ENCODE measurements at regions of chr10 and their contacts with region 1.

Region 1: DNA sequence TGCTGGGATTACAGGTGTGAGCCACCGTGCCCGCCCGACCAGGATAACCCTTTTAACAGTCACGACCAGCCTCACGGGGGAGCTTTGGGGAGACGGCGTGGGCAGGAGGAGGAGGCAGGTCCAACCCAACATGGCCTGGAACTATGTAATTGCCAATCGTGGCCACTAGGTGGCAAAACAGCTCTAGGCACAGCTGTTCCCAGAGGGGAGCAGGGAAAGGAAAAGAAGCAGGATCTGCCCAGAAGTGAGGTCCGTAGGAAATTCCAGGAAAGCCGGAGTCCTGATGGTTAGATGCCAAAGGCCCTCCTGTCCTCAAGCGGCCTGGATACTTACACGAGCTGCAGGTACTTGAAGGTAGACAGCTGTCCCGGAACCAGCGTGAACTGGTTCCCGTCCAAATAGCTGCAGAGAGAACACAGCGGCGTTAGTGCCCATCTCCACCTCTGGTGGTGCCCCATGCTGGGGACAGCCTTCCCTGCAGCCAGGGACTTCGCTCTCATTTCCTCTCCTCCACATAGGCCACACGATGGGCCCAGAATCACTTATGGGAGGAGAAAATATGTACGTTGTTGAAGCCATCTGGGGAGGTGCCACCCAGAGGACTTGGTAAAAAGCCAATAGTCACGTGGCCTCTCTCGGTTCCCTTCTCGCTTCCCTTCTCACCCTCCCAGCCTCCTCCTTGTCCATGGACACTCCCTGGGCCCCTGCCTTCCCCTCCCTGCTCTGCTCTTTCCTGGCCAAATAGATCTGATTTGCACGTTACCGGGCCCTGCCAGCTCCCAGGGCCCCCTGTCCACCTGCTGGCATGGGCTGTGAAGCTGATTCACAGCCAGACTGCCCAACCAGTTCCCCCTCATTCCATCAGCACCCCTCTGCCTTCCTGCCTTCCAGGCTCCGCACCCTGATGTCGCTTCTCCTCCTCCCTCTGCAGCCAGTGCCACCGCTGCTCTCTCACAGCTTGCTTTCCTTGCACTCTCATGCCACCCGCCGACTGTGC is 148.1 kb downstream of the SLIT1 start:
- DNase-seq: peak; percentile 89
- H3K4me3 ChIP-seq: peak overlapping the region in 1 of 2 experiments; percentile 20; a peak in 1 of 4 replicates
- H3K27ac ChIP-seq: no peak overlapping the region
- H3K4me1 ChIP-seq: peaks cover 0 to 4% of the 10 kb centered on the region in 2 experiments; a peak in 1 of 4 replicates
- H3K27me3 ChIP-seq: no peaks in the 10 kb centered on the region
- CTCF ChIP-seq: peak; percentile 81
- EP300 ChIP-seq: no peak
- RAD21 ChIP-seq: peak; percentile 87

Region 2: DNA sequence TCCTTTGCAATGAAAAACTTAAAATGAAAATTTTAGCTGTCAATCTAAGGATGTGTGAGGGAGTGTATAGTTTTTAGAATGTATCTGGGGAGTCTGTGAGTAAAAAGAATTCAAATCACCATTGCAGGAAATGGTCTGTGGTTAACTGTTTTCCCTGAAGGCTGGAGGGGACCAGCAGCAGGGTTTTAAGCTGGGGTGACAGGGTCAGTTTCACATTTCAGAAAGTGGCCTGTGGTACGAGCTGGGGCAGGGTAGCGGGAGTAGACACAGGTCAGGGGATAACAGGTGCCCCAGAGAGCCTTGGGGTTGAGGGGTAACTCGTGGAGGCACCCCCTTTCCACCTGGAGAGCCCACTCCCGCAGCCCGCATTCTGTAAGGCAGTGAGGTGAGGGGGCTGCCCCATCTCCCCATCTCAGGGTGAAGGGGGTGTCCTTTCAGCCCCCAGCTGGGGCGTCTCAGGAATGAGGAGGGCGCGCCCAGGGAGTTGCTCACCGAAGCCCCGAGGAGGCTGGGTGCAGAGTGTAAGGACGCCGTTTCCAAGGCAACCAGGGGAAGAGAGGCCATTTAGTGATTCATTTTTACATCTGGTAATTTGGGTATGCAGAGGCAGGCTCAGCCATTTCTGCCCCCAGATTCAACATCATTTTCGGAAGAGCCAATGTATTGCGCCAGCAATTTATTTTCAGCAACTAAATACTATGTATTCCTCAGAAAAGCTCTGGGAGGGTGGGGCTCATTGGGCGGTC is 20.8 kb before region 1 on chr10:
- CTCF ChIA-PET with region 1: interaction called, 16 read pairs
- POLR2A ChIA-PET with region 1: interaction called, 3 read pairs
- DNase-seq: no peak
- H3K4me3 ChIP-seq: no peak overlapping the region
- H3K27ac ChIP-seq: no peak overlapping the region
- H3K4me1 ChIP-seq: no peaks in the 10 kb centered on the region
- H3K27me3 ChIP-seq: no peaks in the 10 kb centered on the region
- CTCF ChIP-seq: no peak
- EP300 ChIP-seq: no peak
- RAD21 ChIP-seq: no peak

Region 3: GRCh38 chr10:97025613-97026242 is 11.9 kb before region 1 on chr10:
- CTCF ChIA-PET with region 1: interaction called, 75 read pairs
- POLR2A ChIA-PET with region 1: no interaction called
- DNase-seq: peak; percentile 70
- H3K4me3 ChIP-seq: no peak overlapping the region
- H3K27ac ChIP-seq: no peak overlapping the region
- H3K4me1 ChIP-seq: peaks cover 0 to 16% of the 10 kb centered on the region in 2 experiments; a peak in 1 of 4 replicates
- H3K27me3 ChIP-seq: no peaks in the 10 kb centered on the region
- CTCF ChIP-seq: peak; percentile 66
- EP300 ChIP-seq: no peak
- RAD21 ChIP-seq: peak; percentile 64

Region 4: DNA sequence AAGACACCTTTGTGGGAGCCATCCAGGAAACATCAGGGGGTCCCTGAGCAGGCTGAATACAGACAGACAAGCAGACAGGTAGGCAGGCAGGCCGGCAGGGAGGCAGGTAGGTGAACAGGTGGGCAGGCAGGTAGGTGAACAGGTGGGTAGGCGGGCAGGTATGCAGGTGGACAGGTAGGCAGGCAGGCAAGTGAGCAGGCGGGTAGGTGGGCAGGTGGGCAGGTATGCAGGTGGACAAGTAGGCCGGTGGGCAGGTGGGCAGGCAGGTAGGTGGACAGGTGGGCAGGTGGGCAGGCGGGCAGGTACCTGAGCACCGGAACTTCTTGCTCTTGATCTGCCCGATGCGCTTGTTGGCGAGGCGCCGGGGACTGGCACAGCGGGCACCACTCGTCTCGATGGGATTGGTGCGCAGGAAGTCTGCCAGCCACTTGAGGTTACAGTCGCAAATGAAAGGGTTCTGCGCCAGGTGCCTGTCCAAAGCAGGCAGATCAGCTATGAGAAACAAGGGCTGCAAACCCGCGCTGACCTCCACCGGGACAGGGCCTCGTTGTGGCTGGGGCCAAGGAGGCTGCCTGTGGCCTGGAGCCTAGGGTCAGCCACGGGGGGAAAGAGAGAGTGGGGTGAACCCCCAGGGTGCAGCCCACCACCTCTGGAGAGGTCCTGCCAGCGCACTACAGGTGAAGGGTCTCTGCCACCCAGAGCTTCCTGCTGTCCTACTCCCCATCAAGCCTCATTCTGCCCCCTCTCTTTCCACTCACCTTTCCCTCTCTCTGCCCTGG is 11.2 kb after region 1 on chr10:
- CTCF ChIA-PET with region 1: interaction called, 30 read pairs
- POLR2A ChIA-PET with region 1: no interaction called
- DNase-seq: no peak
- H3K4me3 ChIP-seq: no peak overlapping the region
- H3K27ac ChIP-seq: no peak overlapping the region
- H3K4me1 ChIP-seq: peaks cover 0 to 13% of the 10 kb centered on the region in 2 experiments; a peak in 2 of 4 replicates
- H3K27me3 ChIP-seq: peaks cover 9% of the 10 kb centered on the region; the same call in 1 of the 2 replicates
- CTCF ChIP-seq: no peak
- EP300 ChIP-seq: no peak
- RAD21 ChIP-seq: no peak

Region 5: DNA sequence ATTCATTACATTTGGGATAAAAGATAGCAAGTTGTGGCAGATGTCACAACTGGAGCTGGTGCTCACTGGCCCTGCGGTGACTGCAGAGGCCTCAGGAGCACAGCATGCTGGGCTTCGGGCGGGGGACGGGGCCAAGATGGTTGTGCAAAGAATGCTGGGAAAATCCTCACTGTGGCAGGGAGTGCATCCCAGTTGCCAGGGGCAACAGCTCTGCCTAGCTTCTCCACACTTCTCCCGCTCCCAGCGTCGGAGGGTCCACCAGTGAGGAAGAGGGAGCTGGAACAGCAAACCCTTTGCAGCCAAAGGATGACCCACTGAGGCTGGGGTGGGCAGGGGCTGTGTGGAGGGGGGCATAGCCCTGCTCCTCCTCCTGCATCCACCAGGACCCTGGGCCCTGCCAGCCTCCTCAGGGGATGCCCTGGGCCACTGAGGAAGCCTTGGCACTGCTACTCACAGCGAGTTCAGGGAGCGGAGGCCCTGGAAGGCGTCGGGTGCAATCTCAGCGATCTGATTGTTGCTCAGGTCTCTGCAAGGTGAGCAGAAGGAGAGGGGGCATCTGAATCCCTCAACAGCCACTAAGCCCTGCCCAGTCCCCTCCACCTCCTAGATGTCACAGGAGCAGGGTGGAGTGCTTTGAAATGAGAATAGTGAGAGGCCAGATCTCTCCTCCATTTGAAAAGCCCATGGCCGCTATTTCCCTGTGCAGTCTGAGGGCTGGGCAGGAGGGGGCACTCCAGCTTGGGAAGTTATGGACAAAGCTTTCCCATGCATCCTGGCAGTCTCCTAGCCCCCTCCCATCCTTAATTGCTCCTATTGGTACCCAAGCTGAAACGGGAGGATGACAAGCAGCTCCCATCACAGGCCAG is 21.6 kb after region 1 on chr10:
- CTCF ChIA-PET with region 1: interaction called, 60 read pairs
- POLR2A ChIA-PET with region 1: no interaction called
- DNase-seq: peak; percentile 54
- H3K4me3 ChIP-seq: no peak overlapping the region
- H3K27ac ChIP-seq: no peak overlapping the region
- H3K4me1 ChIP-seq: peaks cover 0 to 5% of the 10 kb centered on the region in 2 experiments; a peak in 1 of 4 replicates
- H3K27me3 ChIP-seq: no peaks in the 10 kb centered on the region; the same call in 1 of the 2 replicates
- CTCF ChIP-seq: no peak
- EP300 ChIP-seq: no peak
- RAD21 ChIP-seq: 0 out of 2 replicates have a peak, but pooled peaks have one; percentile 10

Region 6: DNA sequence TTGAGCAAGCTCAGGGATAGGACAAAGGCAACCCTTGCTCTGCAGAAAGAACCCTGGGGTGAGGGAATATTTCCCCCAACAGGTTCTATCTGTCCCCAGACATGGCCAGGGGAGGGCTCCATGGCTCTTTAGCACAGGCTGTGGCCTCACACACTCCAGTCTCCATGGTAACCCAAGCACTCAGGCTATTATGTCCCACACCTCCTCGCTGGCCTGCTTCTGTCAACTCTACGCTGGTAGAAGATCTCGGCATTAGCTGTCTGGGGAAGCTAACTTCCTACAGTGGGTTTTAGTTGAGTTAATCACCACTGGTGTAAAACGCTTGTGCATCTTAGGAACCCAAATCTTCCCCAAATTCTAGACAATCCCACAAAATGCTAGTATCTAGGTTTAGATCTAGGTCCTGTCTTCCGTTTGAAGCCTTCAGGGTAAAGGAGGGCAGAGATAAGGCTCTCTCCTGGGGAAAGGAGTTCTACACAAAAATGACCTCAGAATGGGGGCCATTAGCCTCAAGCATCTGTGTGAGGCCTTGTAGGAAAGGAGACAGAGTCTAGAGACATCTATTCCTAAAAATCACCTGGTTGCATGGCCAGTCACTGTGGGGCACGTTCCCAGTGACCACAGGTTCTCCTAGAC is 184.8 kb after region 1 on chr10:
- CTCF ChIA-PET with region 1: interaction called, 17 read pairs
- POLR2A ChIA-PET with region 1: no interaction called
- DNase-seq: peak; percentile 46
- H3K4me3 ChIP-seq: no peak overlapping the region
- H3K27ac ChIP-seq: no peak overlapping the region
- H3K4me1 ChIP-seq: peaks cover 6 to 12% of the 10 kb centered on the region in 2 experiments; a peak in 3 of 4 replicates
- H3K27me3 ChIP-seq: no peaks in the 10 kb centered on the region
- CTCF ChIP-seq: no peak
- EP300 ChIP-seq: no peak
- RAD21 ChIP-seq: 0 out of 2 replicates have a peak, but pooled peaks have one; percentile 11

Region 7: GRCh38 chr10:97234400-97234799 is 196.7 kb after region 1 on chr10:
- CTCF ChIA-PET with region 1: interaction called, 84 read pairs
- POLR2A ChIA-PET with region 1: no interaction called
- DNase-seq: peak; percentile 49
- H3K4me3 ChIP-seq: no peak overlapping the region
- H3K27ac ChIP-seq: no peak overlapping the region
- H3K4me1 ChIP-seq: no peaks in the 10 kb centered on the region
- H3K27me3 ChIP-seq: no peaks in the 10 kb centered on the region
- CTCF ChIP-seq: peak; percentile 82
- EP300 ChIP-seq: no peak
- RAD21 ChIP-seq: peak; percentile 84

Measured in SK-N-SH (cell line).